HCT116 (cell line): ENCODE measurements at regions of chr1 and their contacts with region 1.

Region 1: GRCh38 chr1:65459397-65459768 is 38.9 kb downstream of the LEPR start:
- DNase-seq: peak; percentile 4
- ATAC-seq: peak; percentile 83
- H3K4me3 ChIP-seq: no peak overlapping the region
- H3K27ac ChIP-seq: no peak overlapping the region
- H3K4me1 ChIP-seq: peaks cover 0 to 4% of the 10 kb centered on the region in 2 experiments; a peak in 1 of 4 replicates
- H3K27me3 ChIP-seq: no peaks in the 10 kb centered on the region
- CTCF ChIP-seq: peak; percentile 45 to 67 (median 64); a peak in 5 of 6 replicates
- POLR2A ChIP-seq: no peak
- RAD21 ChIP-seq: peak; percentile 60

Region 2: GRCh38 chr1:65235867-65236805 is 223.2 kb before region 1 on chr1:
- CTCF ChIA-PET with region 1: interaction called, 21 read pairs
- POLR2A ChIA-PET with region 1: no interaction called
- RAD21 ChIA-PET with region 1: no interaction called
- intact Hi-C with region 1: no loop called
- DNase-seq: peak; percentile 41
- ATAC-seq: no peak
- H3K4me3 ChIP-seq: no peak overlapping the region
- H3K27ac ChIP-seq: no peak overlapping the region
- H3K4me1 ChIP-seq: no peaks in the 10 kb centered on the region
- H3K27me3 ChIP-seq: no peaks in the 10 kb centered on the region
- CTCF ChIP-seq: peak; percentile 50 to 72 (median 67); a peak in 5 of 6 replicates
- POLR2A ChIP-seq: no peak
- RAD21 ChIP-seq: peak; percentile 74

Region 3: DNA sequence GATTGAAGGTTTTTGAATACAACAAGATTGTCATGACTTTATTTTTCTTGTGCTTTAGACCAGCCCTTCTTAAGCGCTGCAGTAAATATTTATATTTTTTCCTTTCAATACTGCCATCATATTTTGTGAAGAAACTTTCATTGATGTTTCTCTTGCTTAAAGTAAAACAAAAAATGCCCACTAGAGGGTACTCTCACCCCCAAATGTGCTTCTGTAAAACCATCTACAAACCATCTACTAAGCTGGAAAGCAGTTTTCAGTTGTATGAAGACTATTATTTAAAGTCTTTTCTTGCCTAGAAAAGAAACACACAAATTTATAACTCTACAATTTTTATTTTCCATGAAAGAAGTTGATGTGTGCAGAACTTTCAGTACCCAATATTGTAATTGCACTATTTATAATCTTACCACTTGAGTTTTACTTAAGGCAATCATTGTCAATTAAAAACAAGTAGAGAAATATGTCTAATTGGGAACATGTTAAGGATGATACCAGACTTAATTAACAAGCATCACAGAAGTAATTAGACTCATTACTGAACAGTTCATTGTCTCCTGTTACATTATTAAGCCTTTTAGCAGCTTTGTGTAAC is 28.2 kb before region 1 on chr1:
- CTCF ChIA-PET with region 1: interaction called, 13 read pairs
- POLR2A ChIA-PET with region 1: no interaction called
- RAD21 ChIA-PET with region 1: no interaction called
- intact Hi-C with region 1: no loop called
- DNase-seq: no peak
- ATAC-seq: peak; percentile 63; the same call in 1 of the 2 replicates
- H3K4me3 ChIP-seq: no peak overlapping the region
- H3K27ac ChIP-seq: no peak overlapping the region
- H3K4me1 ChIP-seq: peaks cover 0 to 16% of the 10 kb centered on the region in 2 experiments; a peak in 2 of 4 replicates
- H3K27me3 ChIP-seq: no peaks in the 10 kb centered on the region
- CTCF ChIP-seq: peak; percentile 50 to 69 (median 54); a peak in 4 of 6 replicates
- POLR2A ChIP-seq: no peak
- RAD21 ChIP-seq: peak; percentile 57; the same call in 1 of the 2 replicates

Region 4: DNA sequence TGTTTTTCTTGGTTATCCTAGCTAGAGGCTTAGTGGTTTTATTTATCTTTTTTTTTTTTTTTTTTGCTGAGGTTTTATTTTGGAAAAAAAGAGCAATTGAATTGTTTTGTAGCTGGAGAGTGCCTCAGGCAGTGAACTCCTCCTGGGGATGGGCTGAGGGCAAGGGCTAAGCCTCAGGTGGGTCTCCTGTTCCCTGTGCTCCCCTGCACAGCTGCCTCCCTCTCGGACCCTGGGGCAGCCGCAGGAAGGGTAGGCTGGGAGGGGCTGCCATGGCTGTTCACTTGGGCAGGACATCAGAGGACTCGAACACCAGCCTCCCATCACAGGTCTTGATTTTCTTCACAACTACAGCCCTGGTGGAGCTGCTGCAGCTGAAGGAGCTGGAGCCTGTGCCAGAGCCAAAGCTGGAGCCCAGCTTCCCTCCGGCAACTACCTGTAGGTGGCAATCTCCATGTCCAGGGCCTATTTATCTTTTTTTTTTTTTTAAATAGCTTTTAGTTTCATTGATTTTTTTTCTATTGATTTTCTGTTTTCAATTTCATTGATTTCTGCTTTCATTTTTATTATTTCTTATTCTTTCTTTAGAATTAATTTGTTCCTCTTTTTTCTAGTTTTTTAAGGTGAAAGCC is 10.1 kb before region 1 on chr1:
- CTCF ChIA-PET with region 1: interaction called, 28 read pairs
- POLR2A ChIA-PET with region 1: no interaction called
- RAD21 ChIA-PET with region 1: no interaction called
- intact Hi-C with region 1: no loop called
- DNase-seq: no peak
- ATAC-seq: peak; percentile 74
- H3K4me3 ChIP-seq: no peak overlapping the region
- H3K27ac ChIP-seq: no peak overlapping the region
- H3K4me1 ChIP-seq: no peaks in the 10 kb centered on the region
- H3K27me3 ChIP-seq: no peaks in the 10 kb centered on the region
- CTCF ChIP-seq: peak; percentile 12 to 47 (median 29); a peak in 3 of 6 replicates
- POLR2A ChIP-seq: no peak
- RAD21 ChIP-seq: 0 out of 2 replicates have a peak, but pooled peaks have one; percentile 9